CD4-positive, alpha-beta T cell (primary cell): ENCODE measurements at regions of chr6 and their contacts with region 1.

Region 1: GRCh38 chr6:53544470-53545308 is at the start of gene GCLC:
- DNase-seq: peak; percentile 71 to 95 (median 83)
- ATAC-seq: peak; percentile 60
- H3K4me3 ChIP-seq: peak within 1 kb of the TSS; percentile 54
- H3K4me3 Mint-ChIP-seq: peak within 1 kb of the TSS; percentile 99
- H3K27ac ChIP-seq: peak within 1 kb of the TSS in 1 of 2 donors; percentile 31
- H3K27ac Mint-ChIP-seq: peak within 1 kb of the TSS; percentile 69
- H3K4me1 ChIP-seq: peaks cover 43% of the 10 kb centered on the region
- H3K4me1 Mint-ChIP-seq: peaks cover 74% of the 10 kb centered on the region
- H3K27me3 ChIP-seq: no peaks in the 10 kb centered on the region
- H3K27me3 Mint-ChIP-seq: no peaks in the 10 kb centered on the region
- CTCF ChIP-seq: peak; percentile 67
- total RNA-seq, gene GCLC: 8.9 to 10.1 TPM

Region 2: DNA sequence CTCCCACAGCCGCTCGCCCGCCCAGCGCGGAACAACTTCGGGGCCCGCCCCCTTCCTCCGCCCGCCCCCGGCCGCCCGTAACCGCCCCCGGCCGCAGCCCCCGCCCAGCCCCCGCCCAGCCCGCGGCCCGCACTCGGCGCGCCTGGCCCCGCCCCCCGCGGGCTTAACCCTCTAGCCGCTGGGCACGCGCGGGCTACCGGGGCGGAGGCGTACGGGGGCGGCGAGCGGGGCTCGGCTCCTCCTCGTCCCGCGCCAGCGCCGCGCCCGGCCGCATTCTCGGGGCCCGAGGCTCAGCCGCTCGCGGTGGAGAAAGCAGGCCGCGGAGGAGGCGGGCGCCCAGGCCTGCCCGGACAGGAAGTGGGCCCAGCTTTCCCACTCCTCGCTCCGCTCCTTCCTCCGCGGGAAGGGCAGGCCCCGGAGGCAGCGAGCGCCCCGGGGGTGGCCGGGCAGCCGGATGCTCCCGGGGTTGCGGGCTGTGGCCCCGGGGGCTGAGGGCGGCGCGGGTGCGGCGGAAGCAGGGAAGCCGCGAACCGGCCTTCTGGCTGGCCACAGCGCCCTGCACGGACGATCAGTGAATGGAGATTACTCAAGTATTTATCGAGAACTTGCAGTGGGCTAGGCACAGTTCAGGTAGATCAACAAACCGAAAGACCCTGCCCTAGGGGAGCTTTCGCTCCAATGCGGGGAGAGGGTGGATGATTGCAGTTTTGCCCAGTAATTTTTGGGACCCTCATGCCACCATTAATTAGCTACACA is 967.5 kb before region 1 on chr6 and contains the start of gene TRAM2:
- CTCF ChIA-PET with region 1: no interaction called
- POLR2A ChIA-PET with region 1: no interaction called
- intact Hi-C with region 1: loop called in 1 of 2 experiments (anchors 5 kb)
- DNase-seq: peak; percentile 61 to 92 (median 75)
- ATAC-seq: peak; percentile 67
- H3K4me3 ChIP-seq: peak within 1 kb of the TSS; percentile 69
- H3K4me3 Mint-ChIP-seq: peak within 1 kb of the TSS; percentile 86
- H3K27ac ChIP-seq: peak within 1 kb of the TSS in 1 of 2 donors; percentile 60
- H3K27ac Mint-ChIP-seq: peak within 1 kb of the TSS; percentile 86
- H3K4me1 ChIP-seq: peaks cover 39% of the 10 kb centered on the region
- H3K4me1 Mint-ChIP-seq: peaks cover 56% of the 10 kb centered on the region
- H3K27me3 ChIP-seq: no peaks in the 10 kb centered on the region
- H3K27me3 Mint-ChIP-seq: no peaks in the 10 kb centered on the region
- CTCF ChIP-seq: no peak
- total RNA-seq, gene TRAM2: 7.1 to 7.6 TPM

Region 3: DNA sequence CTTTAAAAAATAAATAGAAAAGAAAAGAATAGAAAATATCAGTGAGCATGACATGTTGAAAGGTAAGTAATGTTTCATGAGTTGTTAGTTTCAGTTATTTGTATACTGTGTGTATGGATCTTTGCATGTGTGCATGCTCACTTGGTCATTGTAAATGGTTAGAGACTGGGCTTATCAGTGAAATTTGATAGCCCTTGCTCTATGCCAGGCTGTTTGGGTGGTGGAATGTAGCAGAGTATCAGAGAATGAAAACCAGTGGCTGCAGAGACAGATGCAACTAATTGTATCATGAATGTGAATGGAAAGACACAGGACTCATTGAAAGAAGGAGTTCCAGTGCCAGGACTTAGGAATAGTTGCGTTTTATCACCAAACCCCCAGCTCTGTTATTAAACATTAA is 785.6 kb before region 1 on chr6:
- CTCF ChIA-PET with region 1: no interaction called
- POLR2A ChIA-PET with region 1: no interaction called
- intact Hi-C with region 1: no loop called
- DNase-seq: no peak
- ATAC-seq: no peak
- H3K4me3 ChIP-seq: no peak overlapping the region
- H3K4me3 Mint-ChIP-seq: no peak overlapping the region
- H3K27ac ChIP-seq: no peak overlapping the region
- H3K27ac Mint-ChIP-seq: no peak overlapping the region
- H3K4me1 ChIP-seq: no peaks in the 10 kb centered on the region
- H3K4me1 Mint-ChIP-seq: no peaks in the 10 kb centered on the region
- H3K27me3 ChIP-seq: peaks cover 3% of the 10 kb centered on the region in 2 experiments
- H3K27me3 Mint-ChIP-seq: peaks cover 62% of the 10 kb centered on the region
- CTCF ChIP-seq: no peak

Region 4: GRCh38 chr6:53294095-53294494 is 250.6 kb before region 1 on chr6:
- CTCF ChIA-PET with region 1: no interaction called
- POLR2A ChIA-PET with region 1: no interaction called
- intact Hi-C with region 1: loop called in 1 of 2 experiments (anchors 10 kb)
- DNase-seq: peak in 3 of 14 experiments; percentile 22 to 46 (median 40)
- ATAC-seq: no peak
- H3K4me3 ChIP-seq: no peak overlapping the region
- H3K4me3 Mint-ChIP-seq: no peak overlapping the region
- H3K27ac ChIP-seq: peak overlapping the region in 1 of 2 donors; percentile 23
- H3K27ac Mint-ChIP-seq: peak overlapping the region; percentile 73
- H3K4me1 ChIP-seq: peaks cover 53% of the 10 kb centered on the region
- H3K4me1 Mint-ChIP-seq: peaks cover 89% of the 10 kb centered on the region
- H3K27me3 ChIP-seq: no peaks in the 10 kb centered on the region
- H3K27me3 Mint-ChIP-seq: no peaks in the 10 kb centered on the region
- CTCF ChIP-seq: peak; percentile 33

Region 5: GRCh38 chr6:53492860-53493634 is 51.6 kb before region 1 on chr6:
- CTCF ChIA-PET with region 1: no interaction called
- POLR2A ChIA-PET with region 1: interaction called, 5 read pairs
- intact Hi-C with region 1: loop called in 1 of 2 experiments (anchors 5 kb)
- DNase-seq: peak in 3 of 14 experiments; percentile 63 to 68 (median 66)
- ATAC-seq: peak; percentile 46
- H3K4me3 ChIP-seq: no peak overlapping the region
- H3K4me3 Mint-ChIP-seq: no peak overlapping the region
- H3K27ac ChIP-seq: no peak overlapping the region
- H3K27ac Mint-ChIP-seq: no peak overlapping the region
- H3K4me1 ChIP-seq: peaks cover 3% of the 10 kb centered on the region
- H3K4me1 Mint-ChIP-seq: no peaks in the 10 kb centered on the region
- H3K27me3 ChIP-seq: no peaks in the 10 kb centered on the region
- H3K27me3 Mint-ChIP-seq: peaks cover 18% of the 10 kb centered on the region
- CTCF ChIP-seq: peak; percentile 87

Region 6: GRCh38 chr6:53556986-53557715 is 12.5 kb after region 1 on chr6:
- CTCF ChIA-PET with region 1: no interaction called
- POLR2A ChIA-PET with region 1: no interaction called
- intact Hi-C with region 1: no loop called
- DNase-seq: no peak
- ATAC-seq: no peak
- H3K4me3 ChIP-seq: no peak overlapping the region
- H3K4me3 Mint-ChIP-seq: no peak overlapping the region
- H3K27ac ChIP-seq: no peak overlapping the region
- H3K27ac Mint-ChIP-seq: no peak overlapping the region
- H3K4me1 ChIP-seq: no peaks in the 10 kb centered on the region
- H3K4me1 Mint-ChIP-seq: no peaks in the 10 kb centered on the region
- H3K27me3 ChIP-seq: no peaks in the 10 kb centered on the region
- H3K27me3 Mint-ChIP-seq: no peaks in the 10 kb centered on the region
- CTCF ChIP-seq: no peak

Region 7: DNA sequence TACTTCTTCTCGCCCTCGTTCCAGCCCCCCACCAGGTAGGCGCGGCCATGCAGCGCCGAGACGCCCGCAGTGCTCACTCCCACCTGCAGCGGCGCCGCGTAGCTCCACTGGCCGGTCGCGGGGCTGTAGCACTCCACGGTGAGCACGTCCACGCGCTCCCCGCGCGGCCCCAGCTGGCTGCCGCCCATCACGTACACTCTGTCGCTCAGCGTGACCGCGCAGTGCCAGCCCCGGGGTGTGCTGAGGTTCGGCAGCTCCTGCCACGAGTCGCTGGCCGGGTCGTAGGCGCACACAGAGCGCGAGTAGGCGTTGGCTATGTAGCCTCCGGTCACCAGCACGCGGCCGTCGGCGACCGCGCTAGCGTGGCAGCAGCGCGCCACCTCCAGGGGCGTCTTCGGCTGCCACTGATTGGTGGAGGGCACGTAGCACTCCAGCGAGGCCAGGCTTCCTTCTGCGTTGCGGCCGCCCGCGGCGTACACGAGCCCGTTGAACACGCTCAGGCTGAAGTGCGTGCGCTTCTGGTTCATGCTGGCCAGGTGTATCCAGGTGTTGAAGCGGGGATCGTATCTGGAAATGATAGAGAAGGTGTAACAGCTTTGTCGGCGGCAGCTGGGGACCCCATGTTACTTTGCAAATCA is 107.2 kb after region 1 on chr6:
- CTCF ChIA-PET with region 1: interaction called, 7 read pairs
- POLR2A ChIA-PET with region 1: interaction called, 25 read pairs
- intact Hi-C with region 1: loop called (anchors 1 to 2 kb)
- DNase-seq: peak; percentile 56 to 90 (median 74)
- ATAC-seq: peak; percentile 88
- H3K4me3 ChIP-seq: peak overlapping the region; percentile 62
- H3K4me3 Mint-ChIP-seq: peak overlapping the region; percentile 94
- H3K27ac ChIP-seq: peak overlapping the region in 1 of 2 donors; percentile 38
- H3K27ac Mint-ChIP-seq: peak overlapping the region; percentile 81
- H3K4me1 ChIP-seq: peaks cover 16% of the 10 kb centered on the region
- H3K4me1 Mint-ChIP-seq: peaks cover 34% of the 10 kb centered on the region
- H3K27me3 ChIP-seq: no peaks in the 10 kb centered on the region
- H3K27me3 Mint-ChIP-seq: no peaks in the 10 kb centered on the region
- CTCF ChIP-seq: peak; percentile 26

Region 8: DNA sequence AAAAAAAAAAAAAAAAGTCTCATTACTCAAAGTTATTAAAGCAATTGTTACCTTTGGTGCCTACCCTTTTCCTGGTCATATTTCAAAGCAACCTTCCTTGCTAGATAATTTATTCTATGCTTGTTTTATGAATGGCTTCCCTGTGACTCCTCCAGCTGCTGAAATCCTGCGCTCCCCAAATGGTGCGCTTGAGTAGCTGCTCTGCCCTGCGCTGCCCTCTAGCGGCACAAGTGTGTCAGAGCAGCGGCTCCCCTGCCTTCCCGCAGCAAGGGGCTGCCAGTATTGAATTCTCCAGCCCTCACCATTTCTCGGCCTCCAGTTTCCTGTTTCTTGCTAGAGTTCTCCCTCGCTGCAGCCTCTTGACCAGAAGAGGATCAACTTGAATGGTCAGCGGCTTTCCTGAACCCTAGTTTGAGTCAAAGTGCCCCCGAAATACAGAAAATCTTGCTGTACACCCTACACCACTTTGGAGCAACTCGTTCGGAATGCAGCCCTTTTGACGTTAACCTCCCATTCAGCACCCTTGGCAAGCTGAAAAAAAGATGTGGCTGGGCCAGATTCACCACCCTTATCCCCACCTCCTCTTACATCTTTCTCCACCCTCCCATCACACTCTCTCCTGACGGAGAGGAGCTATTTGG is 181.2 kb after region 1 on chr6:
- CTCF ChIA-PET with region 1: interaction called, 4 read pairs
- POLR2A ChIA-PET with region 1: no interaction called
- intact Hi-C with region 1: loop called in 1 of 2 experiments (anchors 5 kb)
- DNase-seq: peak; percentile 53 to 86 (median 68)
- ATAC-seq: peak; percentile 93
- H3K4me3 ChIP-seq: no peak overlapping the region
- H3K4me3 Mint-ChIP-seq: no peak overlapping the region
- H3K27ac ChIP-seq: no peak overlapping the region
- H3K27ac Mint-ChIP-seq: no peak overlapping the region
- H3K4me1 ChIP-seq: peaks cover 9% of the 10 kb centered on the region
- H3K4me1 Mint-ChIP-seq: peaks cover 5% of the 10 kb centered on the region
- H3K27me3 ChIP-seq: no peaks in the 10 kb centered on the region
- H3K27me3 Mint-ChIP-seq: peaks cover 13% of the 10 kb centered on the region
- CTCF ChIP-seq: peak; percentile 93

Region 9: GRCh38 chr6:53794720-53795253 is 250.1 kb after region 1 on chr6 and contains the start of gene LRRC1:
- CTCF ChIA-PET with region 1: no interaction called
- POLR2A ChIA-PET with region 1: interaction called, 6 read pairs
- intact Hi-C with region 1: loop called (anchors 5 to 10 kb)
- DNase-seq: peak; percentile 65 to 91 (median 78)
- ATAC-seq: peak; percentile 63
- H3K4me3 ChIP-seq: peak within 1 kb of the TSS; percentile 83
- H3K4me3 Mint-ChIP-seq: peak within 1 kb of the TSS; percentile 97
- H3K27ac ChIP-seq: no peak within 1 kb of the TSS
- H3K27ac Mint-ChIP-seq: peak within 1 kb of the TSS; percentile 82
- H3K4me1 ChIP-seq: peaks cover 28% of the 10 kb centered on the region
- H3K4me1 Mint-ChIP-seq: peaks cover 34% of the 10 kb centered on the region
- H3K27me3 ChIP-seq: peaks cover 5 to 13% of the 10 kb centered on the region in 2 experiments
- H3K27me3 Mint-ChIP-seq: peaks cover 13% of the 10 kb centered on the region
- CTCF ChIP-seq: no peak
- total RNA-seq, gene LRRC1: 0.78 to 1.1 TPM